ENCODE measurements at regions of chr1 and their contacts with region 1.

Region 1: GRCh38 chr1:40153073-40153770 is 8.0 kb upstream of the RLF start:
- DNase-seq: no peak
- ATAC-seq: peak in 1 of 2 donors; percentile 51
- H3K4me3 ChIP-seq: no peak overlapping the region
- H3K27ac ChIP-seq: no peak overlapping the region
- H3K4me1 ChIP-seq: peaks cover 0 to 3% of the 10 kb centered on the region in 2 donors
- H3K27me3 ChIP-seq: no peaks in the 10 kb centered on the region
- CTCF ChIP-seq: peak in 4 of 5 experiments; percentile 14 to 72 (median 58)
- POLR2A ChIP-seq: no peak

Region 2: DNA sequence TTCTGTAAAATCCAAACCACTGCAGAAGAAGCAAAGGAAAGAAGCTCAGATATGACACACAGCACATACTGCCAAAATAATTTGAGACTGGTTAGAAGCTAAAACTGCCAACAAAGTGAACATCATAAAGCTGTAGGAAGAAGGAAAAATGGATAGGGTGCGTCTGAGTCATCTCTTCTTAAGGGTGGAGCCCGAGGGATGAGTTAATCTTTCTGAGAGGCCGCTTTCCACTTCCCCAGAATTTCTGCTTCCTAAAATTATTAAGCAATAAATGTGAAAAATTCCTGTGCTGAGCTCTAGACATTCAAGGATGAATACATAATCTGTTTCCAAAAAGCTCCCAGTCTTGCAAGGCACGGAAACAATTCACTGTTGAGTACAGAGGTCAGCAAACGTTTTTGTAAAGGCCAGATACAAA is 76.3 kb before region 1 on chr1:
- in situ Hi-C with region 1: no loop called
- intact Hi-C with region 1: no loop called
- DNase-seq: no peak
- ATAC-seq: peak in 1 of 2 donors; percentile 47
- H3K4me3 ChIP-seq: no peak overlapping the region
- H3K27ac ChIP-seq: no peak overlapping the region
- H3K4me1 ChIP-seq: no peaks in the 10 kb centered on the region
- H3K27me3 ChIP-seq: no peaks in the 10 kb centered on the region
- CTCF ChIP-seq: no peak
- POLR2A ChIP-seq: no peak

Region 3: GRCh38 chr1:40315239-40315794 is 162.1 kb after region 1 on chr1:
- in situ Hi-C with region 1: no loop called
- intact Hi-C with region 1: loop called (anchors 2 kb)
- DNase-seq: peak; percentile 34 to 58
- ATAC-seq: peak; percentile 54 to 92
- H3K4me3 ChIP-seq: peak overlapping the region; percentile 39 to 60 (median 46)
- H3K27ac ChIP-seq: no peak overlapping the region
- H3K4me1 ChIP-seq: peaks cover 4 to 8% of the 10 kb centered on the region in 2 donors
- H3K27me3 ChIP-seq: peaks cover 33 to 43% (median 39%) of the 10 kb centered on the region in 3 donors
- CTCF ChIP-seq: peak; percentile 73 to 90 (median 80)
- POLR2A ChIP-seq: no peak

Region 4: GRCh38 chr1:40338745-40339424 is 185.7 kb after region 1 on chr1:
- in situ Hi-C with region 1: loop called (anchors 5 to 10 kb)
- intact Hi-C with region 1: loop called (anchors 1 kb)
- DNase-seq: peak; percentile 41 to 74
- ATAC-seq: peak; percentile 62 to 94
- H3K4me3 ChIP-seq: peak overlapping the region in 1 of 4 donors; percentile 22
- H3K27ac ChIP-seq: no peak overlapping the region
- H3K4me1 ChIP-seq: no peaks in the 10 kb centered on the region
- H3K27me3 ChIP-seq: no peaks in the 10 kb centered on the region
- CTCF ChIP-seq: peak; percentile 92 to 98 (median 96)
- POLR2A ChIP-seq: no peak

Measured in gastrocnemius medialis (tissue), 4 donors.